ENCODE measurements at regions of chr10 and their contacts with region 1.

Region 1: DNA sequence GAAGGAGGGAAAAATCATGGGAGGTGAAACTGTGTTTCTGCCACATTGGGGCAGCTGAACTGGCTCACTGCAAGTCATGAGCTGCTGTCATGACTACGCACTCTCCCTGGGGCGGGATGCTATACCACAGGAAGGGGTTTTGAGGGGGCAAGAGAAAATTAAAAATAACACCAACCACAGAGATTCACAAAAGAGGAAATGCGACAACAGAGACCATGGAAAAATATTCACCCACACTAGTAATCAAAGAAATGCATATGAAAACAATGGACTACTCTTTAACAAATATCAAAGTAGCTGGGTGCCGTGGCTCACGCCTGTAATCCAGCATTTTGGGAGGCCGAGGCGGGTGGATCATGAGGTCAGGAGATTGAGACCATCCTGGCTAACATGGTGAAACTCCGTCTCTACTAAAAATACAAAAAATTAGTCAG is 65.2 kb upstream of the TM9SF3 start:
- DNase-seq: peak; percentile 90 to 97 (median 96)
- H3K4me3 ChIP-seq: peak overlapping the region in 2 of 7 experiments; percentile 6 to 38
- H3K27ac ChIP-seq: peak overlapping the region in 1 of 2 experiments; percentile 40
- H3K4me1 ChIP-seq: peaks cover 14 to 67% (median 40%) of the 10 kb centered on the region in 4 experiments
- H3K27me3 ChIP-seq: no peaks in the 10 kb centered on the region

Region 2: DNA sequence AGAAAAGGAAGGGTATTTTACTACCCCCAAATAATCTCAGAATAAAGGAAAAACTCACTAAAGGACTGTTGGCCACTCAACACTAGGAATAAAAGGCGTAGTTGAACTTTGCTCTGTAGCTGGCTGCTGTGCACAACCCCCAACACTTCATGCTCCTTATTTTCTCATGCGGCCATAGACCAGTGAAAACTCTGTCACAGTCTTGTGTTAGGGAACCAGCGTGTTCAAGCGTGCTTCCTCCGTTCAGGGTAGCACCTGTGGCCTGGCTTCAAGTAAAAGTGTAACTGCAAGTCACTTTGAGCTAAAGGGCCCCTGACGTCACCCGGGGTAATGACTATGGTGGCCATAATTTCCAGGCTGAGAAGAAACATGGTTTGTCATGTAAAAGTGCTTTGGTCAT is 407.7 kb before region 1 on chr10:
- CTCF ChIA-PET with region 1: no interaction called
- POLR2A ChIA-PET with region 1: no interaction called
- DNase-seq: peak in 1 of 3 donors; percentile 37
- H3K4me3 ChIP-seq: no peak overlapping the region
- H3K27ac ChIP-seq: no peak overlapping the region
- H3K4me1 ChIP-seq: peaks cover 0 to 9% (median 2%) of the 10 kb centered on the region in 4 experiments
- H3K27me3 ChIP-seq: no peaks in the 10 kb centered on the region

Region 3: DNA sequence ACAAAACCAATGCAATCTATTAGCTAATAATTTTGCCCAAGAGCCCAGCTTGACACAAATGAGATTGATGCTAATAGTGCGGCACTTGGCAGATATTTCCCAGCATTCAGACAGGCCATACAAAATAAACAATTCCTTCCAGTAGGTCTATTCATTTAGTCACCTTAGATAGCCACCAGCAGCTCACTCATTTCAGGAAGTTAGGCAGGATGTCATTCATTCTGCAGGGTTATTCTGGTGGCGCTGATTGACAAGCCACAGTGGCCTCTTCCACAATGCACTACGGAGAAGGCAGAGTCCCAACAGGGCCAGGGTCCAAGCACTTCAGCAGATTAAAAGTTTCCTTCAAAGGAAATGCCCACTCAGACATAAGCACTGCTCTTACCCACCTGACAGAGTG is 12.5 kb after region 1 on chr10:
- CTCF ChIA-PET with region 1: interaction called, 16 read pairs
- POLR2A ChIA-PET with region 1: no interaction called
- DNase-seq: peak in 2 of 3 donors; percentile 68 to 80
- H3K4me3 ChIP-seq: no peak overlapping the region
- H3K27ac ChIP-seq: no peak overlapping the region
- H3K4me1 ChIP-seq: peaks cover 15 to 48% (median 24%) of the 10 kb centered on the region in 4 experiments
- H3K27me3 ChIP-seq: no peaks in the 10 kb centered on the region

Region 4: DNA sequence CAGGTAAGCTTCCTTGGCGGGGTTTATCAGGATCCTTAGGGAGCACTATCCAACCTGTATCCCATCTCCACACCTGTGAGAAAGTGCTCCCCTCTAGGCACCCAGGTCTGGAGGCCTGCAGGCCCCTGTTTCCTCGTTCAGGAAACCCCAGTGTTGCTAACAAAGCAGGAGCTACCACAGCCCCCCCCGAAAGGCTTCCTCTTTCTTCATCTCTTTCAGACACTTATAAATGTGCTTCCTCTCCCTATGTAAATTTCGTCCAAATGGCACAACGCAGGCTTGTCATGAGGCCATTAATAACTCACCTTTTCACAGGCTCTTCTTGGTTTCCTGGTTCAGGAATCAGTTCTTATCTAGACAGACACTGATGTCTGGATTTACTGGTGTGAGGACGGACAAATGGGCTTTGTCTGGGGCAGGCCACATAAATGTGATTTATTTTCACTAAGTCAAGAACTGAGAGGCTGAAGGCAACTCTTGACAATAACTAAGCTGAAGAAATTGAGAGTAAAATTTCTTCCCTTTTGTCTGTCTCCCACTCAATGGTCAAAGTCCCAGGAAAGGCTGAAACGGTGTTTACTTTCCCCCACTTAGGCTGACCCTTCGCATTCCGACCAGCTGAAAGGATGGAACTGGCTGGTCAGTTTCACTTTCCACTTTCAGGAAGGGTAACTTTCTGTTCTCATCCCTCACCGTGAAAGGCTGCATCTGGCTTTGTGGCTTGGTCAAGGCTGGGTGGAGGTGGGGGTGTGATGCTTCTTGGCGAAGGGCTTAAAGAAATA is 21.5 kb after region 1 on chr10:
- CTCF ChIA-PET with region 1: interaction called, 29 read pairs
- POLR2A ChIA-PET with region 1: interaction called, 5 read pairs
- DNase-seq: peak; percentile 78 to 97 (median 96)
- H3K4me3 ChIP-seq: peak overlapping the region in 6 of 7 experiments; percentile 20 to 68 (median 58)
- H3K27ac ChIP-seq: peak overlapping the region; percentile 27 to 79
- H3K4me1 ChIP-seq: peaks cover 25 to 70% (median 57%) of the 10 kb centered on the region in 4 experiments
- H3K27me3 ChIP-seq: no peaks in the 10 kb centered on the region

Region 5: GRCh38 chr10:96814264-96814663 is 162.2 kb after region 1 on chr10:
- CTCF ChIA-PET with region 1: no interaction called
- POLR2A ChIA-PET with region 1: no interaction called
- DNase-seq: no peak
- H3K4me3 ChIP-seq: no peak overlapping the region
- H3K27ac ChIP-seq: no peak overlapping the region
- H3K4me1 ChIP-seq: no peaks in the 10 kb centered on the region
- H3K27me3 ChIP-seq: no peaks in the 10 kb centered on the region

Measured in common myeloid progenitor, CD34-positive (primary cell).